Breast epithelium (tissue), 4 donors: ENCODE measurements at regions of chr3 and their contacts with region 1.

Region 1: GRCh38 chr3:17065881-17066280 is 181.1 kb downstream of the PLCL2 start:
- DNase-seq: no peak
- H3K4me3 ChIP-seq: no peak overlapping the region
- H3K27ac ChIP-seq: no peak overlapping the region
- H3K4me1 ChIP-seq: no peaks in the 10 kb centered on the region
- H3K27me3 ChIP-seq: no peaks in the 10 kb centered on the region
- CTCF ChIP-seq: no peak
- POLR2A ChIP-seq: no peak

Region 2: DNA sequence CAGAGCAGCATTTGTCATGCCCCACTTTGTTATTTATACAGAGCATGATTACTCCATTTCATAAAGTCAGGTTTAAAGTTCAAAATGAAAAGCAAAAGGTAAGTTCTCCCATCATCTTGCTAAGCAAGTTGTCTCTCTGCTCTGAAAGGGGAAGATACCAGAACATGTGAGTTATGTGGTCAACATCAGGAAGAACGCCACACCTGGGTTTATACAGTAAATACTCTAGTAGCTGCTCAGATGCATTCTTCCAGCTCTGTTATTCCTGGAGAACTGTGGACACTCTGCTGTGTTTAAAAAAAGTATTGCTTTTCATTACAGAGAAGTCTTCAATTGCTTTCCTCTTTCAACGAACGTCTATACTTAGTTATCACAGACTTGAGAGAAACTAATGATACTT is 35.4 kb before region 1 on chr3:
- intact Hi-C with region 1: loop called (anchors 2 kb)
- DNase-seq: no peak
- H3K4me3 ChIP-seq: no peak overlapping the region
- H3K27ac ChIP-seq: no peak overlapping the region
- H3K4me1 ChIP-seq: no peaks in the 10 kb centered on the region
- H3K27me3 ChIP-seq: no peaks in the 10 kb centered on the region
- CTCF ChIP-seq: no peak
- POLR2A ChIP-seq: no peak